ENCODE measurements at regions of chr5 and their contacts with region 1.

Region 1: GRCh38 chr5:141701360-141702119 is 19.5 kb upstream of the ARAP3 start:
- DNase-seq: no peak
- H3K4me3 Mint-ChIP-seq: peak overlapping the region; percentile 74
- H3K27ac Mint-ChIP-seq: no peak overlapping the region
- H3K4me1 Mint-ChIP-seq: peaks cover 12% of the 10 kb centered on the region
- H3K27me3 Mint-ChIP-seq: peaks cover 45% of the 10 kb centered on the region

Region 2: DNA sequence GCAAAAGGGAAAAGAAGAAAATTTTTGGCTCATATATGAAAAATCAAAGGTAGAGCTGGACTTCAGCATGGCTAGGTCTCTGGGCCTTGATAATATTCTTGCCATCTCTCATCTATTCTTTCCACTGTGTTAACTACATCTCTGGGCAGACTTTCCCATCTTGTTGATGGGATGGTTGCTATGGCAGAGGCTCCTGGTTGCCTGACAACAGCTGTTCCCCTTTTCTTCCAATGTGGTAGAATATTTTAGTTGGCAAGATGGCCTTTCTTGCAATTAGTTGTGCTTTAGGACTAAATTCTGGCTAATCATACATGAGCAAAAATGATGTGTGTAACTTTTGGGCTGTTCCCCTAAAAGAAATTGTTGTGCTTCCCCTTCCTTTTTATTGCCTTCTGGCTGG is 20.7 kb after region 1 on chr5:
- intact Hi-C with region 1: no loop called
- DNase-seq: no peak
- H3K4me3 Mint-ChIP-seq: no peak overlapping the region
- H3K27ac Mint-ChIP-seq: no peak overlapping the region
- H3K4me1 Mint-ChIP-seq: no peaks in the 10 kb centered on the region
- H3K27me3 Mint-ChIP-seq: peaks cover 17% of the 10 kb centered on the region

Region 3: GRCh38 chr5:141734501-141735230 is 33.1 kb after region 1 on chr5:
- intact Hi-C with region 1: loop called (anchors 2 kb)
- DNase-seq: peak; percentile 2
- H3K4me3 Mint-ChIP-seq: no peak overlapping the region
- H3K27ac Mint-ChIP-seq: no peak overlapping the region
- H3K4me1 Mint-ChIP-seq: no peaks in the 10 kb centered on the region
- H3K27me3 Mint-ChIP-seq: peaks cover 4% of the 10 kb centered on the region

Region 4: GRCh38 chr5:141813789-141814602 is 112.5 kb after region 1 on chr5:
- intact Hi-C with region 1: loop called (anchors 1 kb)
- DNase-seq: peak; percentile 11
- H3K4me3 Mint-ChIP-seq: no peak overlapping the region
- H3K27ac Mint-ChIP-seq: no peak overlapping the region
- H3K4me1 Mint-ChIP-seq: no peaks in the 10 kb centered on the region
- H3K27me3 Mint-ChIP-seq: peaks cover 38% of the 10 kb centered on the region

Region 5: GRCh38 chr5:141960449-141961202 is 259.1 kb after region 1 on chr5:
- intact Hi-C with region 1: loop called (anchors 1 kb)
- DNase-seq: peak; percentile 82
- H3K4me3 Mint-ChIP-seq: peak overlapping the region; percentile 24
- H3K27ac Mint-ChIP-seq: peak overlapping the region; percentile 76
- H3K4me1 Mint-ChIP-seq: peaks cover 42% of the 10 kb centered on the region
- H3K27me3 Mint-ChIP-seq: no peaks in the 10 kb centered on the region

Region 6: GRCh38 chr5:141968914-141969608 is 267.5 kb after region 1 on chr5 and contains the start of gene RNF14:
- intact Hi-C with region 1: loop called (anchors 1 kb)
- DNase-seq: peak; percentile 95
- H3K4me3 Mint-ChIP-seq: peak within 1 kb of the TSS; percentile 92
- H3K27ac Mint-ChIP-seq: peak within 1 kb of the TSS; percentile 93
- H3K4me1 Mint-ChIP-seq: peaks cover 26% of the 10 kb centered on the region
- H3K27me3 Mint-ChIP-seq: no peaks in the 10 kb centered on the region
- total RNA-seq, gene RNF14: 26.4 and 28.7 TPM in 2 replicates